HEK293 (cell line): ENCODE measurements at regions of chr4 and their contacts with region 1.

Region 1: GRCh38 chr4:87390891-87391575 is at the start of gene HSD17B11:
- H3K4me3 ChIP-seq: peak within 1 kb of the TSS; percentile 61
- H3K27ac ChIP-seq: peak within 1 kb of the TSS; percentile 65
- H3K4me1 ChIP-seq: no peaks in the 10 kb centered on the region
- CTCF ChIP-seq: peak; percentile 54; the same call in 1 of the 2 replicates

Region 2: DNA sequence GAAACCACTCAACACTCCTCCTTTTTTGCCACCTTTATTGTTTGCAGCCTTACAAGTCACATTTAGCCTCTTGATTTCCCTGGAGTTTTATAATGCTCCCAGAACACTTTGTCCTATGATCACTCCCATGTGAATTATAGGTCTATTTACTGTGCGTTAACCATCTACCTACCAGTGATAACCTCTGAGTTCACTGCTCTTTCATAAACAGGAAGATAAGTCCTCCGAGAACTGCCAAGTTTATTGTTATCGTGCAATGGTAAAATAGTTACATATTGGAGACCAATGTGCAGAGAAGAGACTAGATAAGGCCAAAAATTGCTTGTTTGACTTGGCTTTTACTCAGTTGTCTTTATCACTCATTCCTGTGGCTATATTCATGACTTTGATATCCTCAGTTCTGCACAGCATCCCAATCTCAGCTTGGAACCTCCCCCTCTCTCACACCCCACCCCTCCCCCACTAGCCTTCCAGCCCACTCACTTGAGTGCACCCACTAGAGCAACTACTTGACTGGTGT is 18.4 kb after region 1 on chr4:
- CTCF ChIA-PET with region 1: no interaction called
- POLR2A ChIA-PET with region 1: interaction called, 10 read pairs
- H3K4me3 ChIP-seq: no peak overlapping the region
- H3K27ac ChIP-seq: no peak overlapping the region
- H3K4me1 ChIP-seq: no peaks in the 10 kb centered on the region
- CTCF ChIP-seq: no peak